A673 (cell line): ENCODE measurements at regions of chr5 and their contacts with region 1.

Region 1: DNA sequence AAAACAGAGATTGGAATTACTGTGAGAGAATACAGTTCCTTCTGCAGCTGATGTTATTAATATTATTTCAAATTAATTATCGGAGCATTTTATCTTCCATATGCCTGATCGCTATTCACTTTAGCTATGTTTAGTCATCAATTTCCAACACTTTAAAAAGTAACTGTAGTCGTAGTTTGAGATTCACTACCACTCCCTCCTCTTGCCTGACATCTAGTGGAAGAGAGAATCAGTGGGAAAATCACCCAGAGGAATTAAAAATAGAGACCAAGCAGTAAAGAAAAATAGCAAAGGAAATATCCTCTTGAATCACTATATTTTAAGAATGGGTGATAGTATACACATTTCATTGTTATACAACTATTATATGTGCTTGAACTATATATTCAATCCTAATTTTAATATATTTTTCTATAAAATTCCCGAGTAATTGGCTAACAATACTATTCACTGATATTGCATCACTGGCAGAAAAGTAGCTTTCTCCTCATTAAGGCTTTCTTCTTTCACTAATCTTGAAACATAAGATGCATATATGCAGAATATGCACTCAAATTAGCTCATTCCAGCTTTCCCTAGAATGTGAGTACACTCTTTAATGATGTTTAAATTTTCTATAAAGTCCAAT is 708.7 kb downstream of the CDH9 start:
- DNase-seq: peak; percentile 12
- H3K4me3 ChIP-seq: no peak overlapping the region
- H3K27ac ChIP-seq: no peak overlapping the region
- H3K4me1 ChIP-seq: no peaks in the 10 kb centered on the region
- H3K27me3 ChIP-seq: no peaks in the 10 kb centered on the region
- CTCF ChIP-seq: peak; percentile 55; the same call in 1 of the 2 replicates

Region 2: DNA sequence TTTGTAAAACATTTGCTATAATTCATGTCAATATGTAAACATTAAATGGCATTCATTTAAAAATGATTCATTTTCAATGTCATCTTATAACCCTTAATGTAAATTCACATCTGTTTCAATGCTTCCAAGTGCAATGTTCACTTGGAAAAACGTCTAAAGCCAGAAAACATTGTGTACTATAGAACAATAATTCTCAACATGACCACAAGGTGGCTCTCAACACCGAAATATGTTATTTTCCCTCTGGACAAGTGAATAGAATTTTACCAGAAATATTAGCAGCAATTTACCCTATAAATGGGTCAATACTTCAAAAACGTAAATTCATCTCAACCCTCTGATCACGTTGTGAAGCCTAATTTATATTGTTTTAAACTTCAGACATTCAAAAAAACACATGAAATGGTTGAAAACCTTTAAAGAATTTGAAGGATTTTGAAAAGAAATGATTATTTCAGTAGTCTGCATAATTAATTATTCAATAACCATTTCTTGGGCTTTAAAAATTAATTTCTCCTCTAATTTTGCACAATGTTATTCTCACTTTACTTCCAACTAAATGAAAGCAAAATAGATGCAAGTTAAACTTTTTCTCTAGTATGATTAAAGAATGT is 1695.9 kb before region 1 on chr5:
- CTCF ChIA-PET with region 1: no interaction called
- POLR2A ChIA-PET with region 1: no interaction called
- intact Hi-C with region 1: loop called (anchors 10 kb)
- DNase-seq: peak; percentile 60
- H3K4me3 ChIP-seq: no peak overlapping the region
- H3K27ac ChIP-seq: no peak overlapping the region
- H3K4me1 ChIP-seq: no peaks in the 10 kb centered on the region
- H3K27me3 ChIP-seq: no peaks in the 10 kb centered on the region
- CTCF ChIP-seq: peak; percentile 70